Pancreas (tissue), 10 donors: ENCODE measurements at regions of chr5 and their contacts with region 1.

Region 1: DNA sequence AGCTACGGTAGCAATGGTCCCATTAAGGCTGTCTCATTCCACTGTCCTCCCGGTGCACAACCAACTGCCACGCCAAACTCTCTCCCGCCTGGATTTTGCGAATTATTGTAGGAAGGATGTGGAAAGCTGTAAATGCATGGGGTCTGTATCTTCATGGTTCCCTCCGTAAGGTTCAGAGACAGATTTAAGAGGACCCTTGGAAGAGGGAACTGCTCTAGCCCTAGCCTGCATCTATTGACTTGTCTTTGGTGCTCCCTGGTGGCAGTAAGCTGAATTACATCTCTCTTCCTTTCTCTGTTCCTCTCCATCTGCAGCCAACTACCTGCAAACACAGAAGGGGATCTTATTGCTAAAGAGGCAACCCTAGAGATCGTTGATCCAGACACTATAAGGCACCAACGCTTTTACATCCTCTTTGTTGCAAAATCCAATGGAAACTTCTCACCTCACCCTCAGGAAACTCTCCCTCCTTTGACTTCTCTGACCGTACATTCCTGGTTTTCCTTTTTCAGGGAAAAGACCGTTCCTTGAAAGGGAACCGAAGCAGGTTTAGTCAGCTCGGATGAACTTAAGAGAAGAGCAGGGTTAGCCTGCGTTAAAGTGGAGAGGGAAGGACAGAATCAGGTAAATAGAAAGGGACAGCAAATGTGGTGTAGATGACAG is 11.9 kb downstream of the CAPSL start:
- DNase-seq: peak in 3 of 6 donors; percentile 17 to 55 (median 23)
- ATAC-seq: peak; percentile 77 to 92 (median 87)
- H3K4me3 ChIP-seq: no peak overlapping the region
- H3K27ac ChIP-seq: no peak overlapping the region
- H3K4me1 ChIP-seq: no peaks in the 10 kb centered on the region
- H3K27me3 ChIP-seq: peaks cover 0 to 7% (median 2%) of the 10 kb centered on the region in 4 donors
- CTCF ChIP-seq: peak; percentile 56 to 76 (median 66)

Region 2: DNA sequence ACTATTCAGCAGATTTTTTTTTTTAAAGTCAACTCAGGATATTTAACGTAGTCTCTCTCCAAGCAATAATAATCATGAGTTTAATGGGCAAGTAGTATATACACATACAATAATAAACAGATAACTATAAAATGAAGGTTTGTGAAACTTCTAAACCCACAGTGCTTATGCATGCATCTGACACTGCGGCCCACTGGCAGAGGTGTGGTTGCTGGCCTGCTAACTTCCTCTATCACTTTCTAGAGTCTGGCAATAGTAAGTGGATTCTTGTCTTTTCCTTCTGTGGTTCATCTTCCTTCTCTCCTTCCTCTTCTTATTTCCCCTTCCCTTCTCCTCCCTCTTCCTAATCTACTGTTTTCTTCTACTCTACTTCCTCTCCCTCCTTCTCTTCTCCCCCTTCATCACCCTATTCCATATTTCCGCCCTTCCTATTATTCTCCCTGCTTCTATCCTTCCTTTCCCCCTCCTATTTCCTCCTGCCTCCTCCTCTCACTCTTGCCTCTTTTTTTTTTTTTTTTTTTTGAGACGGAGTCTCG is 860.2 kb before region 1 on chr5:
- intact Hi-C with region 1: no loop called
- DNase-seq: no peak
- ATAC-seq: no peak
- H3K4me3 ChIP-seq: no peak overlapping the region
- H3K27ac ChIP-seq: no peak overlapping the region
- H3K4me1 ChIP-seq: no peaks in the 10 kb centered on the region
- H3K27me3 ChIP-seq: no peaks in the 10 kb centered on the region
- CTCF ChIP-seq: no peak

Region 3: GRCh38 chr5:35089334-35090314 is 836.9 kb before region 1 on chr5:
- intact Hi-C with region 1: loop called in 1 of 3 experiments (anchors 10 kb)
- DNase-seq: peak in 3 of 6 donors; percentile 42 to 76 (median 47)
- ATAC-seq: peak; percentile 75 to 92 (median 91)
- H3K4me3 ChIP-seq: no peak overlapping the region
- H3K27ac ChIP-seq: no peak overlapping the region
- H3K4me1 ChIP-seq: peaks cover 0 to 3% (median 0%) of the 10 kb centered on the region in 3 donors
- H3K27me3 ChIP-seq: no peaks in the 10 kb centered on the region
- CTCF ChIP-seq: peak in 3 of 4 donors; percentile 55 to 66 (median 62)

Region 4: DNA sequence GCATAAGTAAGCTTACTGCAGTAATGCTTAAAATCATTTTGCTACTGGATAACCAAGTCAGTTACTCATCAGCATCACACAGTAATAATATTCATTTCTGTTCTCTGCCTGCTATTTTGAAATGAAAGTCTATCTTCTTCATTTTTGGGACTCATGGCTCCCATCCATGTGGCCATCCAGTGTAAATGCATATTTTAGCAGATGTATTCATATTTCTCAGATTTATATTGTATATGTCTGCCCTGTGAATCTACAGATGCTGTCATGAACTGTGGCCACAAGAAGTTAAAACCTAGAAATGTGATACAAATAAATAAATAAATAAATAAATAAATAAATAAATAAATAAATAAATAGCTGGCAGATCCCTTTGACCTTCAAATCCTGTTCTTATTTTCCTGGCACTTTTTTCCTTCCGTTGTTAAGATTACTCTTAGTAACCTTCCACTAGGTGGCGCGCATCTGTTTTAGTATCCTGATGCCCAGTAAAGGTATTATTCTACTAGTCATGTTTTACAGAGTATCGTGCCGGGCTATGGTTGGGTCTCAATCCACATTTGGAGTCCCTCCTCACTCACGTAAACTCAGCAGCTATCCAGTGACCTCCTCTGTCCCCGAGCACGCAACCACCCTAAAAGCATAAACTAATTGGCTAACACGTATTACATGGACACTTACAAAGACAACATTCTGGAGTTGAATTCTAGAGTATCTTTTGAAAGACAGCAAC is 149.0 kb before region 1 on chr5:
- intact Hi-C with region 1: loop called in 2 of 3 experiments (anchors 10 kb)
- DNase-seq: peak in 5 of 6 donors; percentile 27 to 62 (median 56)
- ATAC-seq: peak in 3 of 4 donors; percentile 67 to 85 (median 77)
- H3K4me3 ChIP-seq: no peak overlapping the region
- H3K27ac ChIP-seq: no peak overlapping the region
- H3K4me1 ChIP-seq: no peaks in the 10 kb centered on the region
- H3K27me3 ChIP-seq: no peaks in the 10 kb centered on the region
- CTCF ChIP-seq: peak in 3 of 4 donors; percentile 13 to 57 (median 48)

Region 5: DNA sequence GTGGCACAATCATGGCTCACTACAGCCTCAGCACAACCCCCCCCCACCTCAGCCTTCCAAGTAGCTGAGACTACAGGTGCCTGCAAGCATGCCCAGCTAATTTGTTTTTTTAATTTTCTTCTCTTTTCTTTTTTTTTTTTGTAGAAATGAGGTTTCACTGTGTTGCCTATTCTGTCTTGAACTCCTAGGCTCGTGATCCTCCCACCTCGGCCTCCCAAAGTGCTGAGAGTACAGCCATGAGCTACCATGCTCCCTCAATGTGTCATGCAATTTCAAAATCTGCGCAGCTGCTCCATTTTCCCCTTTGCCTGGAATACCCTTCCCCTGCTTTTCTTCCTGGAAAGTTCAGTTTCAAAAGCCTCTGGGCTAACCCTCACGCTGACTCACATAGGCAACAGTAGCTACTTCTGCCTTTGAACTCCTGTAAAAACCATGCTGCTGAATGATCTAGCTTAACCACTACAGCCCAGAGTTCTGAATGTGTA is 140.9 kb before region 1 on chr5:
- intact Hi-C with region 1: loop called in 1 of 3 experiments (anchors 10 kb)
- DNase-seq: no peak
- ATAC-seq: peak in 1 of 4 donors; percentile 40
- H3K4me3 ChIP-seq: no peak overlapping the region
- H3K27ac ChIP-seq: no peak overlapping the region
- H3K4me1 ChIP-seq: no peaks in the 10 kb centered on the region
- H3K27me3 ChIP-seq: no peaks in the 10 kb centered on the region
- CTCF ChIP-seq: no peak

Region 6: DNA sequence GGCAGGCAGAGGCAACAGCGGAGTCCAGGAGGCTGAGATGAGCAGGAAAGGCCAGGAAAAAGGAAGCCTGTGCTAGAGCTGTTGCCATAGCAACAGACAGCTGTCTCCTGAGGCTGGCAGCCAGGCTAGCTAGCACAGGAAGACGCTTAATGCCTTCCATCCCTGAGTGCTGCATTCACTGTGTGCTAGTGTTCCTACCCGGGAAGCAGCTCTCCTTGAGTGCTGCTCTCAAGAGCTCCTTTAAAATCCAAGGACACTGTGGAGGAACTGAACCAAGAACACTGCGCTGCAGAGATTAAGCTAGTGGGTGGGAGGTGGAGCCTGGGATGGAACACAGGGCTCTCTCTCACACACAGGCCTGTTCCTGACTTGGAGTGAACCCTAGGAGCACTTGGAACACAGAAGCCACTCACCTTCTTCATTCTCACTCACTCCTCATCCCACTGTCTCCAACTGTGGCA is 123.3 kb before region 1 on chr5:
- intact Hi-C with region 1: no loop called
- DNase-seq: no peak
- ATAC-seq: peak in 3 of 4 donors; percentile 54 to 86 (median 72)
- H3K4me3 ChIP-seq: no peak overlapping the region
- H3K27ac ChIP-seq: no peak overlapping the region
- H3K4me1 ChIP-seq: no peaks in the 10 kb centered on the region
- H3K27me3 ChIP-seq: no peaks in the 10 kb centered on the region
- CTCF ChIP-seq: no peak

Region 7: DNA sequence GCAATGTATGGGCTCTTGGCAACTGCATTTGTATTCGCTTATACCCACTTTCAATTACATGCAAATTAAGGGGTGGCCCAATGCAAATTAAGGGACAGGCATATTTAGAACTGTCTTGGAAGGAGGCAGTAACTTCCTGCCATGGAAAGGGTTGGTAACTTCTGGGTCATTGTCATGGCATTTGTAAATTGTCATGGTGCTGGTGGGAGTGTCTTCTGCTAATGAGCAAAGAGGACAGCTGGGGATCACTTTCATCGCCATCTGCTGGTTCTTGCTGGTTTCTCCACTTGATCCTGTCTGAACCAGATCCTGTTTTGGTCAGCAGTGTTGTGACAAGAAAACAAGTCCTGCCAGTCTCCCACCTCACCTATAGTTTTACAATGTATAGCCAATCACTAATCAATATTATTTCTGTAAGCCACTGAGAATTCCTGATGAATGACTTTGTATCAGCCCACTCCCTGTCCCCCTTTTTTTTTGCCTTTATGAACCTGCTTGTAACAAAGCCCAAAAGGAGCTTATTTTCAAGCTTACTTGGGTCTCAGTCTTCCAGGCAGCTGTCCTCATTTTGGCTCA is 163.6 kb after region 1 on chr5:
- intact Hi-C with region 1: no loop called
- DNase-seq: no peak
- ATAC-seq: peak in 2 of 4 donors; percentile 24 to 25
- H3K4me3 ChIP-seq: no peak overlapping the region
- H3K27ac ChIP-seq: no peak overlapping the region
- H3K4me1 ChIP-seq: no peaks in the 10 kb centered on the region
- H3K27me3 ChIP-seq: no peaks in the 10 kb centered on the region
- CTCF ChIP-seq: no peak